ENCODE measurements at regions of chrX and their contacts with region 1.

Region 1: DNA sequence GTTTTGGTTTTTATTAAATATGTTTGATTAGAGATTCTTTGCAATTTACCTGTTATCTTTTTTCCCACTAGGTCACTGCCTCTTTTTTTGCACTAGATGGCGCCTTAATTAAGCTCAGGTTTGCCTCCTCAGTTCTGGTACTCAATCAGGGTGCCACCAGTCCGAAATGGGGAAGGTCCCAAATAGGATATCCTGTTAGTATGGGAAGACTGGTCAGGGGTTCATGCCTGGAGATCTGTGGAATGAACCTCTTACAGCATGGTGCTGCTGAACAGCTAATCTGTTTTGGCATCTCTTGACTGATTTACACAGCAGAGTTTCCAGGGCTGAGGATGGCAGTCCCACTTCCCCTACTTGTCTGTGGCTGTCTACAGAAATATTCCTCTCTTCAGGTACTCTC is 24.2 kb upstream of the VSIG1 start:
- DNase-seq: no peak
- ATAC-seq: peak; percentile 74
- H3K4me3 ChIP-seq: no peak overlapping the region
- H3K27ac ChIP-seq: no peak overlapping the region
- H3K4me1 ChIP-seq: no peaks in the 10 kb centered on the region
- H3K27me3 ChIP-seq: no peaks in the 10 kb centered on the region
- CTCF ChIP-seq: peak; percentile 53 to 61 (median 59); a peak in 5 of 6 replicates
- EP300 ChIP-seq: no peak
- POLR2A ChIP-seq: no peak
- RAD21 ChIP-seq: peak; percentile 76

Region 2: GRCh38 chrX:107968623-107969022 is 52.0 kb before region 1 on chrX:
- CTCF ChIA-PET with region 1: no interaction called
- POLR2A ChIA-PET with region 1: no interaction called
- RAD21 ChIA-PET with region 1: no interaction called
- SMC1A ChIA-PET with region 1: no interaction called
- in situ Hi-C with region 1: no loop called
- intact Hi-C with region 1: no loop called
- DNase-seq: no peak
- ATAC-seq: no peak
- H3K4me3 ChIP-seq: no peak overlapping the region
- H3K27ac ChIP-seq: no peak overlapping the region
- H3K4me1 ChIP-seq: no peaks in the 10 kb centered on the region
- H3K27me3 ChIP-seq: no peaks in the 10 kb centered on the region
- CTCF ChIP-seq: no peak
- EP300 ChIP-seq: no peak
- POLR2A ChIP-seq: no peak
- RAD21 ChIP-seq: no peak

Region 3: GRCh38 chrX:108001174-108001814 is 19.3 kb before region 1 on chrX:
- CTCF ChIA-PET with region 1: interaction called, 12 read pairs
- POLR2A ChIA-PET with region 1: no interaction called
- RAD21 ChIA-PET with region 1: no interaction called
- SMC1A ChIA-PET with region 1: interaction called, 4 read pairs
- in situ Hi-C with region 1: no loop called
- intact Hi-C with region 1: no loop called
- DNase-seq: no peak
- ATAC-seq: peak; percentile 96
- H3K4me3 ChIP-seq: no peak overlapping the region
- H3K27ac ChIP-seq: no peak overlapping the region
- H3K4me1 ChIP-seq: no peaks in the 10 kb centered on the region
- H3K27me3 ChIP-seq: no peaks in the 10 kb centered on the region
- CTCF ChIP-seq: peak; percentile 55 to 70 (median 66)
- EP300 ChIP-seq: no peak
- POLR2A ChIP-seq: no peak
- RAD21 ChIP-seq: peak; percentile 48

Region 4: DNA sequence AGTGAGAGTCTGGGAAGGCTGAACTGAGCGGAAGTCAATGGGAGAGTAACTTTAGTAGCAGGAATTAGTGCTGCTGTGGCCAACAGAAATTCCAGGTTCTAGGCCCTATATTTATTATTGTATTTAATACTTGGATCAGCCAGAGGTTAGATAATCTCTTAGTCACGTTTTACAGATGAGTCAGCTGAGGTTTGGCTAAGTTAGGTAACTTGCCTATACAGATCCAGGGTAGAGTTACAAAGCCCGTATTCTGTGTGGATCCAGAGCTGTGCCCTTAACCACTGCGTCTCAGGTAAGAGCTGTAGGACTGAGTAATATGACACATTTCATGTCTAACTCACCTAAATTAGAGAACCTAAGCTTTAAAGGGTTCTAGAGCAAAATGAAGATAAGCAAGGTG is 50.3 kb after region 1 on chrX:
- CTCF ChIA-PET with region 1: interaction called, 36 read pairs
- POLR2A ChIA-PET with region 1: no interaction called
- RAD21 ChIA-PET with region 1: interaction called, 28 read pairs
- SMC1A ChIA-PET with region 1: interaction called, 23 read pairs
- in situ Hi-C with region 1: no loop called
- intact Hi-C with region 1: loop called (anchors 1 kb)
- DNase-seq: no peak
- ATAC-seq: peak; percentile 20; the same call in 2 of the 3 replicates
- H3K4me3 ChIP-seq: no peak overlapping the region
- H3K27ac ChIP-seq: no peak overlapping the region
- H3K4me1 ChIP-seq: no peaks in the 10 kb centered on the region
- H3K27me3 ChIP-seq: peaks cover 0 to 3% of the 10 kb centered on the region in 2 experiments; a peak in 1 of 4 replicates
- CTCF ChIP-seq: no peak
- EP300 ChIP-seq: no peak
- POLR2A ChIP-seq: no peak
- RAD21 ChIP-seq: no peak

Region 5: DNA sequence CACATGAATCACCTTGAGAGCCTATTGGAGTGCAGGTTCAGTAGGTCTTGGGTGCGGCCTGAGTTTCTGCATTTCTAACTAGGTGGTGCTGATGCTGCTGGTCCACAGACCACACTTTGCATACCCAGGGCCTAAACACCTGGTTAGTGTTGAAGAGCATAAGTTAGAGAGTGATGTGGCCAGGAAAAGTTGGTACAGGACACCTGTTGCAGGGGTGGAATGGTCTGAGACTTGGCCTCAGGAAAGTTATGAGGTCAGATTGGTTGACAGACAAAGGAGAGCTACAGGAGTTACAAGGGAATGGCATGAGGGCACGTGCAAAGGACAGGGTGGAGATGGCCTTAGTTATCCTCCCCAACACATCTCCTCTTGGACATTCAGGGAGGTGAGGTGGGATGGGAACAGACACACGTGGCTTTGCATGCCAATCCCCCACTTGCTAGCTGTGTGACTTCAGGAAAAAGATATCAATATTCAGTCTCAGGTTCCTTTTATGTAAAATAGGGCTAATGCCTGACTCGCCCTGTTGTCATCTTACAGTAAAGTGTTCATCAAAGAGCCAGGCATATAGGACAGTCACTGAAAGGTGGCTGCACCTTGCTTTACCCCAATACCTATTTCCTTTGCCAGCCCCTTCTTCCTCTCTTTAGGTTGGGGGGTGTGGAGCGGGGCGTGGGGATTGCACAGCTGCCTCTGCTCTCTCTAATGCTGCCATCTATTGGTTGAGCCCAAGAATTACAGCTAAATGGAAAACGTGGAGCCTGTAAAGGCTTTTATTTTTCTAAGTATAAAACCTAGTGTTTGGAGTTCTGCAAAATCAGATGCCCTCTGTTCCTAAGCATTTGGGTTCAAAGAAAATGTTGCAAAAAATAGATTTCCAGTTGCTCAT is 118.4 kb after region 1 on chrX:
- CTCF ChIA-PET with region 1: interaction called, 9 read pairs
- POLR2A ChIA-PET with region 1: interaction called, 3 read pairs
- RAD21 ChIA-PET with region 1: interaction called, 4 read pairs
- SMC1A ChIA-PET with region 1: interaction called, 3 read pairs
- in situ Hi-C with region 1: no loop called
- intact Hi-C with region 1: loop called (anchors 1 kb)
- DNase-seq: no peak
- ATAC-seq: peak; percentile 77
- H3K4me3 ChIP-seq: no peak overlapping the region
- H3K27ac ChIP-seq: no peak overlapping the region
- H3K4me1 ChIP-seq: no peaks in the 10 kb centered on the region
- H3K27me3 ChIP-seq: no peaks in the 10 kb centered on the region
- CTCF ChIP-seq: peak; percentile 44 to 67 (median 58)
- EP300 ChIP-seq: no peak
- POLR2A ChIP-seq: no peak
- RAD21 ChIP-seq: peak; percentile 41; the same call in 1 of the 2 replicates

Measured in GM12878 (cell line).